Mammary epithelial cell (primary cell): ENCODE measurements at regions of chr4 and their contacts with region 1.

Region 1: DNA sequence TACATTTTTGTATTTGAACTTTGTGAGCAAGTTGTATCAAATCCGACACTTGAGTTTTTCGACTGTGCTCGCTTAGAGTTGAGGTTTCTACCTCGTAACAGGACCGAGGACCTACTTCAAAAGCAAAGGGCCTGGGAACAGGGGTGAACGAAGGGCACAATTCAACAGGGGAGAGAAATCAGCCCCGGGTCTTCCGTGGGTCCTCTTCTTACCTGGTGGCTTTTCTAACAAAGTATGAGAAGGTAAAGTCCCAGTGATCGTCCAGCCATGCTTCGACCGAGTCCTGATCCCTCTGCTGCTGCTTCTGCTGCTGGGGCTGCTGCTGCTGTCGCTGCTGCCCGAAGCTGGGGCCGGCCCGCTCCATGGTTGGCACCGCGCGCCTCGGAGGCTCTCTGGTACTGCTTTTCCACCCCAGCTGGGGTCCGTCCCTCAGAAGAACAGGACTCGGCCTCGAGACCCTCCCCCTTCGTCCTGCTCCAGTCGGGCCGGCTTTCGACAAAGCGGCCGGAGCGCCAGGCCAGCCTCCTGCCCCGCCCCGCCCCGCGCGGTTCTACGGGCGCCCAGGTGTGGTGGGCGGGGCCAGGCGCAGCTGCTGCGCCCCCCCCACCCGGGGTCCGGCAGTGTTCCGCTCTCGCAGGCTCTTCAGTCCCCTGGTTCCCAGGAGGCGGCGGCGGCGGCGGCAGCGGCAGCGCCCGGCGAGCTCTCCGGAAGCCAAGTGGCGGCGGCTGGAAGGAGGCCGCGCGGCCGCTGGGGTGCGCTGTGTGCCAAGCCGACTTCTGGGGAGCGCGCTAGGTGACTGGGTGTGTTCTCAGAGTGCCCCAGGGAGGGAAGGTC is at the start of gene PDE5A:
- DNase-seq: peak; percentile 87
- H3K4me3 ChIP-seq: peak within 1 kb of the TSS; percentile 72 to 85 (median 81)
- H3K27ac ChIP-seq: no peak within 1 kb of the TSS
- H3K4me1 ChIP-seq: peaks cover 12% of the 10 kb centered on the region
- H3K27me3 ChIP-seq: no peaks in the 10 kb centered on the region
- CTCF ChIP-seq: peak; percentile 56 to 64
- total RNA-seq, gene PDE5A: 4.3 to 17.3 TPM

Region 2: DNA sequence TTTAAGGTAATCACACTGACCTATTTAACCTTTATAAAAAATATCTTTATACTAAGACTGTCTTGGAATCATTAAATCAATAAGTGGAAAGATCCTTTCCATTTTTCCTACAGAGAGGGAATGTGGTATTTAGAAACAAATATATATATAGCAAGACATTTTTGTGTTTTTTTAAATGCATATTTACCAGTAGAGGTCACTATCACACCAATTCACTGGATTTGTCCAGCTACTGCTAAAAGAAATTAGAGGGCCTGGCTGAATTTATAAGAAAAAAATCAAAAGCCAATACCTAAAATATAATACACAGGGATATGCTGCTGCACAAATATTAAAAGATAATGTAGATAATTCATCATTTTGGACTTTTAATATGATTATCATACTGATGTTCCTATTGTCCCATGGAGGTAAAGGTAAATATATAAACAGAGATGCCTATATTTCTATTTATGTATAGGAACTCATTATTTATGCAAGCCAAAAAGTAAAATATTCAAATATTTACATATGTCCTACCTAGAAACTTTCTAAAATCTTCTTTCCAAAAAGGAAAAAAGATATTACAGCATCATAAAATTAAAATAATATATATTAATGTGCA is 69.4 kb before region 1 on chr4:
- CTCF ChIA-PET with region 1: interaction called, 4 read pairs
- dilution Hi-C with region 1: no loop called
- in situ Hi-C with region 1: no loop called
- intact Hi-C with region 1: loop called (anchors 1 kb)
- DNase-seq: peak; percentile 19
- H3K4me3 ChIP-seq: no peak overlapping the region
- H3K27ac ChIP-seq: no peak overlapping the region
- H3K4me1 ChIP-seq: no peaks in the 10 kb centered on the region
- H3K27me3 ChIP-seq: no peaks in the 10 kb centered on the region
- CTCF ChIP-seq: peak; percentile 22 to 52

Region 3: GRCh38 chr4:119692001-119692400 is 63.5 kb after region 1 on chr4:
- CTCF ChIA-PET with region 1: no interaction called
- dilution Hi-C with region 1: no loop called
- in situ Hi-C with region 1: no loop called
- intact Hi-C with region 1: loop called (anchors 2 kb)
- DNase-seq: peak; percentile 3
- H3K4me3 ChIP-seq: no peak overlapping the region
- H3K27ac ChIP-seq: no peak overlapping the region
- H3K4me1 ChIP-seq: no peaks in the 10 kb centered on the region
- H3K27me3 ChIP-seq: no peaks in the 10 kb centered on the region
- CTCF ChIP-seq: peak in 1 of 2 donors; percentile 42

Region 4: DNA sequence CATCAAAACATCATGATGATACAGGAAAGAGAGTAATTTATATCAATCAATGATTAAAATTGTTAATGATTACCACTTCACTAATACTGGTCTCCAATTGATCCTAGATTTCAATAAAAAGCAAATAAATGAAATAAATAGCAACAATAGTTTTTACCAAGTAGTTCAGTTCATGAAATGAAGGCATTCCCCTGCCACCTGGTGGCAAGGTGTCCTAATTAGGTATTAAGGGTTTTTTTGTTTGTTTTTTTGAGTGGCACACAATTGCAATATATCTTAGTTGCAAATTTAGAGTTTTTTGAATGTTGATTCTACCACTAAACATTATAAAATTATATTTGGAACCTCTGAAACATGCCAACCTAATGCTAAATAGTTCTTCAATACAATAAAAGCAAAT is 157.4 kb after region 1 on chr4:
- CTCF ChIA-PET with region 1: interaction called, 11 read pairs
- dilution Hi-C with region 1: no loop called
- in situ Hi-C with region 1: loop called in 1 of 2 experiments (anchors 25 kb)
- intact Hi-C with region 1: loop called (anchors 1 kb)
- DNase-seq: peak; percentile 5
- H3K4me3 ChIP-seq: no peak overlapping the region
- H3K27ac ChIP-seq: no peak overlapping the region
- H3K4me1 ChIP-seq: no peaks in the 10 kb centered on the region
- H3K27me3 ChIP-seq: no peaks in the 10 kb centered on the region
- CTCF ChIP-seq: peak; percentile 20 to 59